Aorta (tissue), 5 donors: ENCODE measurements at regions of chr2 and their contacts with region 1.

Region 1: GRCh38 chr2:198883604-198884003 is 574.1 kb downstream of the SATB2 start:
- DNase-seq: no peak
- ATAC-seq: no peak
- H3K4me3 ChIP-seq: no peak overlapping the region
- H3K27ac ChIP-seq: no peak overlapping the region
- H3K4me1 ChIP-seq: peaks cover 1 to 2% of the 10 kb centered on the region in 2 donors
- H3K27me3 ChIP-seq: no peaks in the 10 kb centered on the region

Region 2: GRCh38 chr2:198957181-198957580 is 73.6 kb after region 1 on chr2:
- intact Hi-C with region 1: loop called in 1 of 2 experiments (anchors 5 kb)
- DNase-seq: no peak
- ATAC-seq: no peak
- H3K4me3 ChIP-seq: no peak overlapping the region
- H3K27ac ChIP-seq: no peak overlapping the region
- H3K4me1 ChIP-seq: peaks cover 0 to 4% of the 10 kb centered on the region in 2 donors
- H3K27me3 ChIP-seq: no peaks in the 10 kb centered on the region